Cardiac septum (tissue), 1 donor: ENCODE measurements at regions of chr5 and their contacts with region 1.

Region 1: GRCh38 chr5:112412346-112412745 is 6.7 kb downstream of the EPB41L4A start:
- DNase-seq: no peak

Region 2: DNA sequence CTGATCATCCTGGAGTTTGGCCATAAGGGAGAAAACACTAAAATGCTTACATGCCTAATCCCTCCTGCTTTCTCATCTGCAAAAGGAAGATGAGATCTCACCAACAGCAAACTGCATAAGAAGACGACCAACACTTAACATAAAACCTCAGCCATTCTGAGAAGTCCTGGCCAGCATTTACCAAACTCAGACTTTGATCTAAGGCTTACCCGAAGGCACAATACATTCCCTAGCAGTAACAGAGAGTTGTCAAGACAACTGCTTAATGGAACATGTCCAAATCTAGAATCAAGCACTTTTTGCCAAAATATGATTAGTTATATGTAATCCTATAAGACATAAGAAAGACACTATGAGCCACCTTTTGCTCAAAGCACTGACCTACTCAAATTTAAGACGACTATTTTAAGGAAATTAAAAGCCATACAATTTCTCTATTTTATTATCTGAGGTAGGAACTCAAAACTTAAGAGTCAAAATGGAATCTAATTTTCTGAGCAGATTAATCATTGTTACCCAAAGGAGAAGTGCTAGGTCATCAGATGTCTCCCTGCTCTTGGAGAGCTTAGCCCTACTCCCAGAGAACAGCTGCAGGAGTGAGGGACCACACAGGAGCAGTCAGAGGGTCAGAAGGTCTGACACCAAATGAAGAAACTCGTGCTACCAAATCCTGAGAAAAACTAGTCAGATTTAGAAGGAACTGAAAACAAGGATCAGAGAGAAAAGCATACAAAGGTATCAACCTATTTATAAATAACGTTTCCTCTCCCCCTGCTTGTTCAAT is 32.6 kb before region 1 on chr5:
- intact Hi-C with region 1: loop called (anchors 5 kb)
- DNase-seq: no peak